A673 (cell line): ENCODE measurements at regions of chr6 and their contacts with region 1.

Region 1: GRCh38 chr6:45377554-45378333 is at the start of gene SUPT3H:
- DNase-seq: peak; percentile 98
- H3K4me3 ChIP-seq: peak within 1 kb of the TSS; percentile 95
- H3K27ac ChIP-seq: peak within 1 kb of the TSS; percentile 99
- H3K4me1 ChIP-seq: peaks cover 4% of the 10 kb centered on the region
- H3K27me3 ChIP-seq: no peaks in the 10 kb centered on the region
- CTCF ChIP-seq: 0 out of 2 replicates have a peak, but pooled peaks have one; percentile 10
- total RNA-seq, gene SUPT3H: 10.8 and 14.2 TPM in 2 replicates

Region 2: DNA sequence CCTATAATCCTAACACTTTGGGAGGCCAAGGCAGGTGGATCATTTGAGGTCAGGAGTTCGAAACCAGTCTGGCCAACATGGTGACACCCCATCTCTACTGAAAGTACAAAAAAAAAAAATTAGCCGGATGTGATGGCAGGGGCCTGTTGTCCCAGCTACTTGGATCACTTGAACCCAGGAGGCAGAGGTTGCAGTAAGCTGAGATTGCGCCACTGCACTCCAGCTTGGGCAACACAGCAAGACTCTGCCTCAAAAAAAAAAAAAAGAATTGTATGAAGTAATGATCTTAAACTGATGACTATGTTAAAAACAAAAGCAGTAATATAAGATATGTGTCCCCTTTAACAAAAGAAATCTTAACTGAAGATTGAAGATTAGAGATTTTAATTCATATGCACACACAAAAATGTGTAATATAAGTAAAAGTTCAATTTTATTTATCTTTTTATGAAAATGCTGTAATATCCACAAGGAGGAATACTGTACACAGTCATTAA is 78.6 kb before region 1 on chr6:
- CTCF ChIA-PET with region 1: interaction called, 3 read pairs
- POLR2A ChIA-PET with region 1: no interaction called
- intact Hi-C with region 1: loop called (anchors 2 kb)
- DNase-seq: no peak
- H3K4me3 ChIP-seq: no peak overlapping the region
- H3K27ac ChIP-seq: no peak overlapping the region
- H3K4me1 ChIP-seq: no peaks in the 10 kb centered on the region
- H3K27me3 ChIP-seq: no peaks in the 10 kb centered on the region
- CTCF ChIP-seq: no peak